A549 (cell line): ENCODE measurements at regions of chr9 and their contacts with region 1.

Region 1: GRCh38 chr9:92242260-92243136 is 51.0 kb downstream of the IARS1 start:
- DNase-seq: peak; percentile 18 to 28
- ATAC-seq: peak; percentile 69 to 76
- H3K4me3 ChIP-seq: no peak overlapping the region
- H3K27ac ChIP-seq: peak overlapping the region; percentile 60 to 69; a peak in 5 of 6 replicates
- H3K4me1 ChIP-seq: peaks cover 45% of the 10 kb centered on the region
- CTCF ChIP-seq: peak; percentile 48
- EP300 ChIP-seq: no peak
- POLR2A ChIP-seq: no peak
- RAD21 ChIP-seq: peak; percentile 40 to 48; a peak in 4 of 5 replicates

Region 2: DNA sequence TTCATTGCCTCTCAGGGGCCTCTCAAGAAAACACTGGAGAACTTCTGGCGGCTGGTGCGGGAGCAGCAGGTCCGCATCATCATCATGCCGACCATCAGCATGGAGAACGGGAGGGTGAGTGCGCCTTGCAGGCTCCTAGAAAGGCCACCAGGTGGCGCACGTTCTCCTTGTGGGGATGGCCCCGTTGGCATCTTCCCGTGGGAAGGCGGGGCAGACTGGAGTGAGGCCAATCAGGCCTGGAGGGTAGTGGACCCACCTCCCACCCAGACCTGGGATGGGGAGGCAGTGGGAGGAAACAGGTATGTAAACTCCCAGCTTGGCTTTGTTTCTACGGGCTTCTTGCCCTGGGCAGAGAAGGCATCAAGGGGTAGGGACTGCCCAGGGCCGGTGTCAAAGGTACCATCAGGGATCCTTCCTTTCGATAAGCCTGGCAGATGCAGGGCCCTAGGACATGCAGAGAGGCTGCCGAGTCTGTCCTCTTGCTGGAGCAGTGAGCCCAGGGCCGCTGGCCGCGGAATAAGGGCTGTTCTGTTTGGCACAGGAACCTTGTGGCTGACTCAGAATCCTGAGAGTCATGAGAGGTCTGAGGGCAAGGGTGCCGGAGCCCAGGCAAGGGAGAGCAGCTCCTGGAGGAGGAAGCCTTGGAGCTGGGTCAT is 108.4 kb before region 1 on chr9:
- CTCF ChIA-PET with region 1: interaction called, 214 read pairs
- POLR2A ChIA-PET with region 1: no interaction called
- DNase-seq: peak; percentile 85 to 88
- ATAC-seq: peak; percentile 78 to 89
- H3K4me3 ChIP-seq: peak overlapping the region; percentile 19; the same call in 1 of the 3 replicates
- H3K27ac ChIP-seq: peak overlapping the region; percentile 37 to 73; a peak in 4 of 6 replicates
- H3K4me1 ChIP-seq: peaks cover 5% of the 10 kb centered on the region; the same call in 1 of the 3 replicates
- CTCF ChIP-seq: peak; percentile 85
- EP300 ChIP-seq: no peak
- POLR2A ChIP-seq: no peak
- RAD21 ChIP-seq: peak; percentile 86 to 89

Region 3: GRCh38 chr9:92254381-92255337 is 12.2 kb after region 1 on chr9:
- CTCF ChIA-PET with region 1: interaction called, 11 read pairs
- POLR2A ChIA-PET with region 1: no interaction called
- DNase-seq: no peak
- ATAC-seq: peak; percentile 38 to 54; a peak in 2 of 6 replicates
- H3K4me3 ChIP-seq: no peak overlapping the region
- H3K27ac ChIP-seq: no peak overlapping the region
- H3K4me1 ChIP-seq: no peaks in the 10 kb centered on the region
- CTCF ChIP-seq: no peak
- EP300 ChIP-seq: no peak
- POLR2A ChIP-seq: no peak
- RAD21 ChIP-seq: no peak